ENCODE measurements at regions of chr7 and their contacts with region 1.

Region 1: GRCh38 chr7:43834463-43835251 is 34.7 kb downstream of the MRPS24 start:
- DNase-seq: no peak
- H3K4me3 ChIP-seq: no peak overlapping the region
- H3K27me3 ChIP-seq: no peaks in the 10 kb centered on the region
- CTCF ChIP-seq: no peak

Region 2: GRCh38 chr7:43700059-43700501 is 134.6 kb before region 1 on chr7:
- CTCF ChIA-PET with region 1: interaction called, 21 read pairs
- POLR2A ChIA-PET with region 1: no interaction called
- DNase-seq: no peak
- H3K4me3 ChIP-seq: no peak overlapping the region
- H3K27me3 ChIP-seq: no peaks in the 10 kb centered on the region
- CTCF ChIP-seq: peak; percentile 58

Region 3: DNA sequence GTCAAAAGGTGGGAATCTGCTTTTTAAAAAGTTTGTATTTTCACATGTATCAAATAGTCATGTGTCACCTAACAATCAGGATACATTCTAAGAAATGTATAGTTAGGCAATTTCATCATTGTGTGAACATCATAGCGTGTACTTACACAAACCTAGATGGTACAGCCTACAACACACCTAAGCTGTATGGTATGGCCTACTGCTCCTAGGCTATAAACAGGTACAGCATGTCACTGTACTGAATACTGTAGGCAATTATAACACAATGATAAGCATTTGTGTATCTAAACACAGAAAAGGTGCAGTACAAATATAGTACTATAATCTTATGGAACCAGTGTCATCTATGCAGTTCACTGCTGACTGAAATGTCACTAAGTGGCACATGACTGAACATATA is 123.2 kb before region 1 on chr7:
- CTCF ChIA-PET with region 1: interaction called, 11 read pairs
- POLR2A ChIA-PET with region 1: no interaction called
- DNase-seq: no peak
- H3K4me3 ChIP-seq: no peak overlapping the region
- H3K27me3 ChIP-seq: no peaks in the 10 kb centered on the region
- CTCF ChIP-seq: no peak

Region 4: GRCh38 chr7:43721193-43721806 is 113.4 kb before region 1 on chr7:
- CTCF ChIA-PET with region 1: interaction called, 10 read pairs
- POLR2A ChIA-PET with region 1: no interaction called
- DNase-seq: no peak
- H3K4me3 ChIP-seq: no peak overlapping the region
- H3K27me3 ChIP-seq: no peaks in the 10 kb centered on the region
- CTCF ChIP-seq: peak; percentile 50

Region 5: GRCh38 chr7:43729214-43729923 is 105.3 kb before region 1 on chr7 and contains the start of gene COA1:
- CTCF ChIA-PET with region 1: interaction called, 35 read pairs
- POLR2A ChIA-PET with region 1: no interaction called
- DNase-seq: peak; percentile 53
- H3K4me3 ChIP-seq: peak within 1 kb of the TSS; percentile 92
- H3K27me3 ChIP-seq: no peaks in the 10 kb centered on the region
- CTCF ChIP-seq: peak; percentile 19; the same call in 1 of the 2 replicates
- polyA plus RNA-seq, gene COA1: 20.2 and 23.4 TPM in 2 replicates

Region 6: GRCh38 chr7:43758029-43758821 is 76.4 kb before region 1 on chr7 and contains the start of gene BLVRA:
- CTCF ChIA-PET with region 1: interaction called, 10 read pairs
- POLR2A ChIA-PET with region 1: no interaction called
- DNase-seq: no peak
- H3K4me3 ChIP-seq: peak within 1 kb of the TSS; percentile 73
- H3K27me3 ChIP-seq: no peaks in the 10 kb centered on the region
- CTCF ChIP-seq: no peak
- polyA plus RNA-seq, gene BLVRA: 33.9 and 36.1 TPM in 2 replicates

Region 7: GRCh38 chr7:43850348-43851116 is 15.9 kb after region 1 on chr7:
- CTCF ChIA-PET with region 1: interaction called, 43 read pairs
- POLR2A ChIA-PET with region 1: no interaction called
- DNase-seq: no peak
- H3K4me3 ChIP-seq: no peak overlapping the region
- H3K27me3 ChIP-seq: no peaks in the 10 kb centered on the region
- CTCF ChIP-seq: no peak

Region 8: GRCh38 chr7:44103923-44104859 is 269.5 kb after region 1 on chr7 and contains the start of gene AEBP1:
- CTCF ChIA-PET with region 1: no interaction called
- POLR2A ChIA-PET with region 1: no interaction called
- DNase-seq: no peak
- H3K4me3 ChIP-seq: peak within 1 kb of the TSS; percentile 49
- H3K27me3 ChIP-seq: no peaks in the 10 kb centered on the region
- CTCF ChIP-seq: no peak
- polyA plus RNA-seq, gene AEBP1: 45.7 and 117 TPM in 2 replicates

Measured in BJ (cell line).